ENCODE measurements at regions of chr12 and their contacts with region 1.

Region 1: GRCh38 chr12:108950991-108951739 is 69.7 kb downstream of the SVOP start:
- DNase-seq: peak; percentile 89
- H3K4me3 ChIP-seq: peak overlapping the region in 1 of 8 donors; percentile 30
- H3K27ac ChIP-seq: no peak overlapping the region
- H3K4me1 ChIP-seq: peaks cover 0 to 19% (median 7%) of the 10 kb centered on the region in 6 donors
- H3K27me3 ChIP-seq: no peaks in the 10 kb centered on the region
- CTCF ChIP-seq: peak; percentile 65 to 90 (median 82)
- POLR2A ChIP-seq: no peak

Region 2: GRCh38 chr12:108803428-108804105 is 147.6 kb before region 1 on chr12:
- intact Hi-C with region 1: loop called (anchors 10 kb)
- DNase-seq: peak; percentile 78
- H3K4me3 ChIP-seq: no peak overlapping the region
- H3K27ac ChIP-seq: peak overlapping the region; percentile 48 to 79 (median 72)
- H3K4me1 ChIP-seq: peaks cover 10 to 47% (median 34%) of the 10 kb centered on the region in 6 donors
- H3K27me3 ChIP-seq: no peaks in the 10 kb centered on the region
- CTCF ChIP-seq: peak; percentile 91 to 97 (median 95)
- POLR2A ChIP-seq: no peak

Region 3: GRCh38 chr12:108879615-108880254 is 71.4 kb before region 1 on chr12 and contains the start of gene DAO:
- intact Hi-C with region 1: no loop called
- DNase-seq: peak; percentile 42
- H3K4me3 ChIP-seq: no peak within 1 kb of the TSS
- H3K27ac ChIP-seq: no peak within 1 kb of the TSS
- H3K4me1 ChIP-seq: peaks cover 0 to 9% (median 2%) of the 10 kb centered on the region in 6 donors
- H3K27me3 ChIP-seq: no peaks in the 10 kb centered on the region
- CTCF ChIP-seq: no peak
- POLR2A ChIP-seq: no peak
- total RNA-seq, gene DAO: 0.42 TPM in 1 of 7 donors, not detected in the others

Region 4: GRCh38 chr12:108907476-108908351 is 43.5 kb before region 1 on chr12:
- intact Hi-C with region 1: no loop called
- DNase-seq: peak; percentile 13
- H3K4me3 ChIP-seq: no peak overlapping the region
- H3K27ac ChIP-seq: peak overlapping the region in 4 of 8 donors; percentile 25 to 33 (median 28)
- H3K4me1 ChIP-seq: peaks cover 8 to 38% (median 25%) of the 10 kb centered on the region in 6 donors
- H3K27me3 ChIP-seq: no peaks in the 10 kb centered on the region
- CTCF ChIP-seq: no peak
- POLR2A ChIP-seq: no peak

Measured in spleen (tissue), 13 donors.